ENCODE measurements at regions of chr1 and their contacts with region 1.

Region 1: DNA sequence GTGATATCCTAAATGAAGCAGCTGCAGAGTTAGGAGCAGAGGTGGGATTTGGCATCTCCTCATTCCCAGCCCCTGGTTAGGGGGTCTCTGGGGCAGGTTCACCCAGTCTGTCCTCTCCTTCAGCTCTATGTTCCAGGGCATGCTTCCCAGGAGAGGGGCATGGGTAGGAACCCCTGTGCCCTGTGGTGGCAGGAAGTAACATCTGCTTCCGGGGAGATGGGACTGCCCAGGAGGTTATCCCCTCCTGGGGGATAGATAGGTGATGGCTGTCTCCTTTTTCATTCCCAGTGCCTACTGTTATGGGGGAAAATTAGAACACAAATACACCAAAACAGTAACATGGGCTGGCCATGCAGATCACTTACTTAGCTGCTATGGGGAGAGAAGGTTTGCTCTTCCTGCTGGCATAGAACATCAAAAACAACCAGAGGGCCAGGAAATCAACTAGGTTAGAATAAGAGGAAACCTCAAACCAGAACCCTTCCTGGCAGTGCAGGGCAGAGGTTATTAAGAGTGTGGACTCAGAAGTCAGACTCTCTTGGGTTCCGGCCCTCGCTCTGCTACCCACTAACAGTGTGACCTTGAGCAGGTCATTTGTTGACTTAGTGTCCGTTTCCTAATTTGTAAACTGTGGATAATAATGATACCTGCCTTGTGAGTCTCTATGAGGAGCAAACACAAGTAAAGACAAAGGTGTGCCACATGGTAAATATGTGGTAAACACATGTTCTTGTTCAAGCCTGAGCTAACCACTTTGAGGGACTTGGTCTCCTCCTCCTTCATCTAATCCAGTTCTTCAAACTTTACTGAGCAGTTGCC is 157.8 kb upstream of the JUN start:
- DNase-seq: peak; percentile 86
- H3K4me3 Mint-ChIP-seq: peak overlapping the region; percentile 57
- H3K27ac Mint-ChIP-seq: peak overlapping the region; percentile 81
- H3K4me1 Mint-ChIP-seq: peaks cover 59% of the 10 kb centered on the region
- H3K27me3 Mint-ChIP-seq: no peaks in the 10 kb centered on the region

Region 2: DNA sequence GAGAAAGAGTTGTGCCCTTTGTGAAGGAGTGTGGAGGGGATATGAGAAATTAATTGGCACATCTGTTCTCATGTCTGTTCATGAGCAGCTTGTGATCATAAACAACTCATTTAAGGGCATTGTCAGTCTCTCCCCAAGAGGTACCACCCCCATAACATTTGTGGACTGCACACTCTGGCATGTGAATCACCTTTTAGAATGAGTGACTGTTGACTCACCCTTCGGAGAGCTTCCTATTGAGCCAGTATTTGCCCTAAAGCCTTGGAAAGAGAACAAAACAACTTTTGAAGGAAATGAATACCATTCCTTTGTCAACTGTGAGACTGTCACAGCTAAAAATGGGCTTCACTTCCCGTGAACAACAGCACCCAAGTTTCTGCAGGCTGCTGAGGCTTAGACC is 214.3 kb before region 1 on chr1:
- intact Hi-C with region 1: no loop called
- DNase-seq: no peak
- H3K4me3 Mint-ChIP-seq: peak overlapping the region; percentile 29
- H3K27ac Mint-ChIP-seq: peak overlapping the region; percentile 50
- H3K4me1 Mint-ChIP-seq: peaks cover 21% of the 10 kb centered on the region
- H3K27me3 Mint-ChIP-seq: no peaks in the 10 kb centered on the region

Region 3: GRCh38 chr1:58857680-58858673 is 83.7 kb before region 1 on chr1:
- intact Hi-C with region 1: loop called (anchors 10 kb)
- DNase-seq: peak; percentile 81
- H3K4me3 Mint-ChIP-seq: peak overlapping the region; percentile 64
- H3K27ac Mint-ChIP-seq: peak overlapping the region; percentile 92
- H3K4me1 Mint-ChIP-seq: peaks cover 49% of the 10 kb centered on the region
- H3K27me3 Mint-ChIP-seq: peaks cover 2% of the 10 kb centered on the region

Region 4: GRCh38 chr1:58929671-58930325 is 11.9 kb before region 1 on chr1:
- intact Hi-C with region 1: no loop called
- DNase-seq: peak; percentile 86
- H3K4me3 Mint-ChIP-seq: peak overlapping the region; percentile 28
- H3K27ac Mint-ChIP-seq: peak overlapping the region; percentile 66
- H3K4me1 Mint-ChIP-seq: peaks cover 57% of the 10 kb centered on the region
- H3K27me3 Mint-ChIP-seq: no peaks in the 10 kb centered on the region